ENCODE measurements at regions of chr12 and their contacts with region 1.

Region 1: DNA sequence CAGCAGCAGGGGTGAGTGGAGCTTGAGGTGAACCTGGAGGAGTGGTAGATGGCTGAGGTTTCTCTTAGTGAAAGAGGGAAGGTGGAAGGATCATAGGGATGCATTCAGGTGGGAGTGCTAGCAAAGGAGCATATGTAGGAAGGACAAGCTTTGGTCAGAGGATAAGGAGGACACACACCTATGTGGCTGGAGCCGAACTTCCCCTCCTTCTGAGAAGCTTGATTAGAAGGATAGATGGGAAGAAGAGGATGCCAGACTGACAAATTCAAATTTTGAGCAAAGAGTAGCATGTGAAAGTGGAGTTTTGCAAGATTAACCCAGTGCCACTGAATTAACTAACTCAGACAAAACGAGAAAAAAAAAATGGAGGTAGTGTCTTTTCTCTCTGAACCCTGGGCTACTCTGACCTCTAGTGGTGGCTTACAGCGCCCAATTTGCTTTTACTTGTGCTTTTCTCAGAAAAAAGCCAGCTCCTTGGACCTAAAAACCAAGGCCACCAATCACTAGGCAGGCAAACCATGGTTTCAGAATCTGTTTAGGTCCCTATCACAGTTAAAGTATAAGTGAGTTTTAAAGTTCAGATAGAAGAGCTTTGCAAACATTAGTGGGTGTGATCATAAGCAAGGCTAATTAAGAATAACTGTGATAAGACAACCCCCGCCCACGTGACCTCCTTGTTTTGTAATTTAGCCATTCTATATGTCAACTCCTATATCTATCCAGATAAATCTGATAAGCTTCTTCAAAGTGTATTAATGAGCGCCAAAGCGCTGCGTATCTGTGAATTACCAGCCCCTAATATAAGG is 15.5 kb downstream of the EMP1 start:
- DNase-seq: no peak
- H3K4me3 ChIP-seq: no peak overlapping the region
- H3K27ac ChIP-seq: no peak overlapping the region
- H3K27me3 ChIP-seq: no peaks in the 10 kb centered on the region
- CTCF ChIP-seq: peak; percentile 86

Region 2: DNA sequence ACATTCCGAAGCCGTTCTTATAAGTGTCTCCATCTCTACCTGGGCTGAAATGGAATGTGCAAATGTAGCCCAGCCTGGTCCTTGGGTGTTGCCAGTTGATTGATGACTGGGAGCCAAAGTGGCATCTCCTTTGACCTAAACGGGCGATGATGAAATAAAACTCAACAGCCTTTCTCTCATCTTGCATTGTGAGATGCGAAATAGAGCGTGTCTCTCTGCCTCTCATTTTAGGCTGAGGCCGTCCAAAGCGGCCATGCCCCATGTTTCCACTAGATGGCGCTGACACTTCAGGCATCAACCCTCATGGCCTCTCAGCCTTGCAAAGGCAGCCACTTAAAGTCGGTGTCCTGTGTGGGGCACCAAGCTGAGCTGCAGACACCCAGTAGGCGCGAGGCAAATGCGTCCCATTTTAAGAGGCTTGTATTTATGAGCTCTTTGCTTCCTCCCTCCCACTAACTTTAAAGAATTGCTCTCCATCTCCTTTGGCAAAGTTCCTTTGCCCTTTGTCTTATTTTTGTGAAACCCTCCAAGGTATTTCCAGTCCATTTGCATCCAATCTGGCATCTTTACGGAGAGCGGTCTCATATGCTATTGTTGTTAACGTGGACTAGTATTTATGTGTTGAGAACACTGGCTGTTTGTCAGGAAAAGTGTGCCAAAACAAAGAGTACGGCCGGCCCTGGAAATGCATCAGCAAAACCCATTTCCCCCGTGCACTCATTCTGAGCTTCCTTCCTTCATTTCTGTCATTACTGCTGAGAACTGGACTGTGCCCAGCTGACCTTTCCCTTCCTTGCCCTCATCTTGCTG is 295.7 kb before region 1 on chr12:
- CTCF ChIA-PET with region 1: interaction called, 84 read pairs
- POLR2A ChIA-PET with region 1: no interaction called
- DNase-seq: no peak
- H3K4me3 ChIP-seq: no peak overlapping the region
- H3K27ac ChIP-seq: peak overlapping the region; percentile 21
- H3K27me3 ChIP-seq: no peaks in the 10 kb centered on the region
- CTCF ChIP-seq: peak; percentile 99

Region 3: DNA sequence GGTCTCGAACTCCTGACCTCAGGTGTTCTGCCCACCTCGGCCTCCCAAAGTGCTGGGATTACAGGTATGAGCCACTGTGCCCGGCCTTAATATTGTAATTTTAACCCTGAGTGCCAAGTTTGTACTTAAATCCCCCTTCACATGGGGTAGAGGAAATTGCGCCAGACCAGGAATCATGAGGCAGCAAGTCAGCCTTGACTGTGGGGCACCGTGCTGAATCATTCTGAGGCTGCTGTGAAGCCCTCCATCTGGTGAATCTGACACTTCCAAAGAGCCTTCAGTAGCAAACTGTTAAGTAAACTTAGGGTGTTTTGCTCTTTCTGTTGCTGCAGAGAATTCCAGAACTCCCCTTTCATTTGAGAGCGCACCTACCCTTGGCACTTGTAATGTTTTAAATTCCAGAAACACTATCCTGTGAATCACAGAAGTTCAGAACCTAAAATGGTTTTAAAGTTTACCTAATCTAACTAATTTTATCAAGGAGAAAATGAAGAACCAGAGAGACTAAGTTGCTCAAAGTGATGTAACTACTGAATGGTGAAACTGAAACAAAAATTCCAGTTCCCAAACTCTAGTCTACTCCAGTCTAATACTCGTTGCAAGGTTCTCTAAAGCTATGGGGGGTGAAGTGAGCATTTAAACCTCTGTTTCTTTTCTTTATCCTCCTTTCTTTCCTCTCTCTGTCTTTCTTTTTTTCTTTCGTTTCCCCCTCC is 219.5 kb before region 1 on chr12:
- CTCF ChIA-PET with region 1: interaction called, 39 read pairs
- POLR2A ChIA-PET with region 1: no interaction called
- DNase-seq: peak; percentile 93
- H3K4me3 ChIP-seq: peak overlapping the region; percentile 44
- H3K27ac ChIP-seq: peak overlapping the region; percentile 92
- H3K27me3 ChIP-seq: no peaks in the 10 kb centered on the region
- CTCF ChIP-seq: no peak

Region 4: DNA sequence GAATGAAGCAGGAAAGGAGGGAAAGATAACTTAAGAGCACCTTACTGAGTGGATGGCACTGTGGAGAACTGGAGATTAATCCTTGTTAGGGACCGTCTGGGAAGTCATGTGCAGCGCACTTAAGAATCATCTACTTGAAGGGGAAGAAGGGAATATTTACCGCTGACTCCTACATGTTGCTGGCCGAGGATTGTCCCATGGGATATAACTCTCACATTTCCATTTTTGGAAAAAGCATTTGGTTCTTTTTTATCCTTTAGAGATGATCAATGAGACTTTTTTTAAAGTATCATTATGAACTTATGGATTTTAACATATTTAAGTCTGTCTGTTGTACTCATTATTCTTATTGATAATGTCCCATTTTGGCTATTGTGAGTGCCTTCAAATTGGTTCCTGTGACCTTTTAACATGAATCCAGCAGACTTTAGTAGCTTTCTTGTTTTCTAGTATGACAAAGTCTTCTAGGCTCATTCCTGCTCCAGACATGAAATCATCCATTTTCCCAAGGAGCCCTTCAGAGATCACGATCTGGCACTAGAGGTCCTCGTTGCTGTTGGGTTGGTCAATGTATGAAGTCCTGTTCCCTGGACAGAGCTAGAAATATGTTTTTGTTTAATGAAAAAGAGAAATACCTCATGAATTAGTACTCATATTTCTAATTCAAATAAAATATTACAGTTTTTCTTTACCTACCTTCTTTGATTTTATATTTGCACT is 188.1 kb before region 1 on chr12:
- CTCF ChIA-PET with region 1: interaction called, 50 read pairs
- POLR2A ChIA-PET with region 1: no interaction called
- DNase-seq: no peak
- H3K4me3 ChIP-seq: no peak overlapping the region
- H3K27ac ChIP-seq: no peak overlapping the region
- H3K27me3 ChIP-seq: no peaks in the 10 kb centered on the region
- CTCF ChIP-seq: peak; percentile 46

Region 5: GRCh38 chr12:13094347-13094746 is 117.7 kb before region 1 on chr12:
- CTCF ChIA-PET with region 1: interaction called, 63 read pairs
- POLR2A ChIA-PET with region 1: interaction called, 9 read pairs
- DNase-seq: no peak
- H3K4me3 ChIP-seq: no peak overlapping the region
- H3K27ac ChIP-seq: no peak overlapping the region
- H3K27me3 ChIP-seq: no peaks in the 10 kb centered on the region
- CTCF ChIP-seq: no peak

Region 6: DNA sequence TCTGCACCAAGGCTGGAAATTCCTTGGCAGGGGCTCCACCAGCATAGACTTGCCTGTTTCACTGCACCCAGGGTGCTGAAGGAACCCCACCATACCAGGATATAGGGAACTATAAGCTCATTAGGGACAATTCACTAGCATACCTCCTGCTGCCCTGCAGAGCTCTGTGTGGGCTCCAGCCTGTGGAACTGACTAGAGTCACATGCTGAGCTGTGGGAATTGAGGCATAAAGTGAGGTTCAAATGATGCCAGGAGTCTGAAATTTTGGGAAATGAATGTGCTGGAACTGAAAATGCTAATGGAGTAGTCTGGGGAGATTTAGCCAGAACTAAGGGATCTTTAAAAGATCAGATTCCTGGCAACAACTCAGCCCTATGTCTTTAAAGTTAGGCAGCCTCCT is 22.8 kb before region 1 on chr12:
- CTCF ChIA-PET with region 1: interaction called, 11 read pairs
- POLR2A ChIA-PET with region 1: no interaction called
- DNase-seq: no peak
- H3K4me3 ChIP-seq: no peak overlapping the region
- H3K27ac ChIP-seq: no peak overlapping the region
- H3K27me3 ChIP-seq: no peaks in the 10 kb centered on the region
- CTCF ChIP-seq: no peak

Region 7: DNA sequence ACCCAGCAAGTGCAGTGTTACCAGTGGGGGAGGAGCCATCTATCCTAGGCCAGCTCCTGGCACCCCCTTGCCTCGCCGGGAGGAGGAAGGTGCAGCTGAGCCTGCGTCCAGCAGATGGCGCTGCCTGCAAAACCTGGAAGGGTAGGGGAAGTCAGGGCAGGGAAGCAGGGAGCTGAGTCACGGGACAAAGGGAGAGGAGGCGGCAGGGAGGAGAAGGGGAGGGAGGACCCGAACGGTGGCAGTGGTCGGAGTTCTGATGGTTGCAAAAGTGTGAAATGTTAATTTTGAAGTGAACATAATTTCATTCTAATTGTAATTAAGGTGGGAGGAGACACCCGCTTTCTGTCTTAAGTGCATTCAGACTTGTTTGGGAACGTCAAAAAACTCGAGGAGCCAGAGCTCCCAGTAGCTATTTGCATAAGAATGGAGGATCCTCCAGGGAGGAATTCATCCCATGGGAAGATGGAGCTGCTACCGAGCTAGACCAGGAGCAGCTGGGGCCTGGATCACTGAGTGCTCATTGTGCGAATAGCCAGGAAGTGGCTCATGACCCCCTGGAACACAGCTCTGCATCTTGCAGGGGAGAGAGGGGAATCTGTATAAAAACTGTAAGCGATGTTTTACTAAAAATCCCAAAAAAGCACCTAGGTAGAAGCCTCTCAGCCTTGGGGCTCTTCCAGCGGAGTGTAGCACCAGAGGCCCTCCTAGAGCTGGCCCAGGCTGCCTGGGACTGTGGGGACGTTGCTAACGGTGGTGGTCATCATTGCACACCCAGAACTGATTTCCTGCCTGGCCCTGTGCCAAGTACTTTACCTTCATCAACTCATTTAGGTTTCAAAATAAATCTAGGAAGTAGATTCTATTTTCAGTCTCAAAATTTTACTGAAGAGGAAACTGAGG is 44.0 kb after region 1 on chr12:
- CTCF ChIA-PET with region 1: interaction called, 37 read pairs
- POLR2A ChIA-PET with region 1: no interaction called
- DNase-seq: peak; percentile 86
- H3K4me3 ChIP-seq: peak overlapping the region; percentile 51
- H3K27ac ChIP-seq: no peak overlapping the region
- H3K27me3 ChIP-seq: no peaks in the 10 kb centered on the region
- CTCF ChIP-seq: peak; percentile 99

Region 8: GRCh38 chr12:13316587-13317246 is 104.7 kb after region 1 on chr12:
- CTCF ChIA-PET with region 1: no interaction called
- POLR2A ChIA-PET with region 1: no interaction called
- DNase-seq: no peak
- H3K4me3 ChIP-seq: no peak overlapping the region
- H3K27ac ChIP-seq: no peak overlapping the region
- H3K27me3 ChIP-seq: peaks cover 3% of the 10 kb centered on the region
- CTCF ChIP-seq: no peak

Region 9: DNA sequence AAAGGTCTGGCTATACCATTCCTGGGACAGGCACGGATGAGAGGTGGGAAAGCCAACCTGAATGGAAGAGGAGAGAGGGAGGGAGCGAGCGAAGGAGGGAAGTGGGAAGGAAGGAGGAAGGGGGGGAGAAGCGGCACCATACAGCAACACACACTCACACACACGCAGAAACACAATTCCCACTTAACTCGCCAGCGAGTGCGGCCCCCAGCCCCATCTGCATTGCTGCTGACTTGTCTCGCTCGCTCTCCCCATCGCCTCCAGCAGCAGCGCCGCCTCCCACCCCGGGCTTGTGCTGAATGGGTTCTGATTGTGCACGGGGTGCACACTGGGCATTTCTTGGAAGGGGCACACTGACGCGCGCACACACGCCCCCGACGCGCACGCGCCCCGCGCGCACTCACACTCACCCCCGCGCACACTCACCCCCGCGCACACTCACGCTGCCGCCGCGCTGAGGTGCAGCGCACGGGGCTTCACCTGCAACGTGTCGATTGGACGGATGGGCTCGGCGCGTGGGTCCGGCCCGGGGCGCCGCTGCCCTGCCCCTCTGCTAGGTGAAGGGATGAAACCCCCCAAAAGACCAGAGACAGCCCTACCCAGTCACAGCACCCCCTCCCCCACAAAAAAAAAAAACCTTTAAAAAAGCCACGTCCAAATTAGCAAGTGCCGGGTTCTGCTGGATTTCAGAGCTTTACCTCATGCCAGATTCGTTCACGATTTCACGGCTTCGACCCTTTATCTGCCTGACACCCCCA is 768.7 kb after region 1 on chr12:
- CTCF ChIA-PET with region 1: no interaction called
- POLR2A ChIA-PET with region 1: no interaction called
- DNase-seq: no peak
- H3K4me3 ChIP-seq: no peak overlapping the region
- H3K27ac ChIP-seq: no peak overlapping the region
- H3K27me3 ChIP-seq: peaks cover 8% of the 10 kb centered on the region
- CTCF ChIP-seq: no peak

Measured in AG04450 (cell line).